Activated B cell treated with CpG ODN at 0.5 μM for 24 hours (primary cell): ENCODE measurements at regions of chr17 and their contacts with region 1.

Region 1: DNA sequence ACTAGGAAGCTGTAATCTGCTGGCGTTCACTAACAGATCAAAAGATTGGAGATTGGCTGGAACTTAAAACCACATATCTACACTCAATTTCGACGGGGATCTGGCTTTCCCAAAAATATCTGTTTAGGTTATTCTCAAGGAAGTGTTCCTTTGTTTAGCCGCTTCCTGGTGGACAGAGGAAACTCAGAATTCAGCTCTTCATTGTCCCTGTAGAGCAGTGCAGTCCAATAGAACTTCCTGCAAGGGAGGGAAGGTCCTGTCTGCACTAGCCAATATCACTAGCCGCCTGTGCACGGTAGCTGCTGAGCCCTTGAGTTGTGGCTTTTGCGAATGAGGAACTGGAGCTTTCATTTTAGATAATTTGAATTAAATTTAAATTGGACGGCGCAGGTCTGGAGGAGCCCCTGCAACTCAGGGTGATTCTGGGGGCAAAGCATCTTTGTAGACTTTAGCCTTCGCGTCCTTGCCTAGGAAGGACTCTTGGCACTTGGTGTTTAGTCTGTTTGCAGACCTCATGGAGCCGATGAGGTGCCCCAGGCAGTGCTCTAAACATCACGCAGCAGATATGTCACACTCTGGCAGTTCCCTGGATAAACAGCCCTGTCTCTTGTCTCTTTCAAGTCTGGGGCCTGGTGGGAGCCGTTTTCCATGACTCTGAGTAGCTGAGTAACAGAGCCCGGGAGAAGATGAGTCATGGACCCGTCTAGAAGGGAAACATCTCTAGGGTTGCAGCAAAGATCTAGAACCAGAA is 122.2 kb downstream of the CCDC182 start:
- DNase-seq: no peak
- ATAC-seq: peak; percentile 82
- H3K4me3 Mint-ChIP-seq: peak overlapping the region; percentile 77
- H3K27ac Mint-ChIP-seq: peak overlapping the region; percentile 89
- H3K4me1 Mint-ChIP-seq: peaks cover 60% of the 10 kb centered on the region
- H3K27me3 Mint-ChIP-seq: no peaks in the 10 kb centered on the region
- CTCF ChIP-seq: no peak

Region 2: GRCh38 chr17:57261084-57261461 is 361.8 kb before region 1 on chr17:
- CTCF ChIA-PET with region 1: no interaction called
- POLR2A ChIA-PET with region 1: interaction called, 17 read pairs
- intact Hi-C with region 1: loop called (anchors 2 kb)
- DNase-seq: no peak
- ATAC-seq: no peak
- H3K4me3 Mint-ChIP-seq: peak overlapping the region; percentile 65
- H3K27ac Mint-ChIP-seq: peak overlapping the region; percentile 6
- H3K4me1 Mint-ChIP-seq: peaks cover 62% of the 10 kb centered on the region
- H3K27me3 Mint-ChIP-seq: no peaks in the 10 kb centered on the region
- CTCF ChIP-seq: no peak

Region 3: GRCh38 chr17:57440522-57441485 is 182.1 kb before region 1 on chr17:
- CTCF ChIA-PET with region 1: no interaction called
- POLR2A ChIA-PET with region 1: no interaction called
- intact Hi-C with region 1: loop called (anchors 5 kb)
- DNase-seq: no peak
- ATAC-seq: peak; percentile 74
- H3K4me3 Mint-ChIP-seq: peak overlapping the region; percentile 32
- H3K27ac Mint-ChIP-seq: peak overlapping the region; percentile 81
- H3K4me1 Mint-ChIP-seq: peaks cover 91% of the 10 kb centered on the region
- H3K27me3 Mint-ChIP-seq: no peaks in the 10 kb centered on the region
- CTCF ChIP-seq: no peak

Region 4: GRCh38 chr17:57636985-57637665 is 14.3 kb after region 1 on chr17:
- CTCF ChIA-PET with region 1: interaction called, 6 read pairs
- POLR2A ChIA-PET with region 1: interaction called, 22 read pairs
- intact Hi-C with region 1: loop called (anchors 1 kb)
- DNase-seq: no peak
- ATAC-seq: peak; percentile 72
- H3K4me3 Mint-ChIP-seq: peak overlapping the region; percentile 39
- H3K27ac Mint-ChIP-seq: peak overlapping the region; percentile 91
- H3K4me1 Mint-ChIP-seq: peaks cover 24% of the 10 kb centered on the region
- H3K27me3 Mint-ChIP-seq: no peaks in the 10 kb centered on the region
- CTCF ChIP-seq: no peak

Region 5: GRCh38 chr17:57671667-57672632 is 49.1 kb after region 1 on chr17:
- CTCF ChIA-PET with region 1: interaction called, 35 read pairs
- POLR2A ChIA-PET with region 1: interaction called, 5 read pairs
- intact Hi-C with region 1: no loop called
- DNase-seq: peak; percentile 56
- ATAC-seq: peak; percentile 91
- H3K4me3 Mint-ChIP-seq: no peak overlapping the region
- H3K27ac Mint-ChIP-seq: no peak overlapping the region
- H3K4me1 Mint-ChIP-seq: peaks cover 8% of the 10 kb centered on the region
- H3K27me3 Mint-ChIP-seq: no peaks in the 10 kb centered on the region
- CTCF ChIP-seq: peak; percentile 88

Region 6: GRCh38 chr17:57868007-57868909 is 245.4 kb after region 1 on chr17:
- CTCF ChIA-PET with region 1: no interaction called
- POLR2A ChIA-PET with region 1: no interaction called
- intact Hi-C with region 1: no loop called
- DNase-seq: peak; percentile 53
- ATAC-seq: peak; percentile 94
- H3K4me3 Mint-ChIP-seq: peak overlapping the region; percentile 24
- H3K27ac Mint-ChIP-seq: peak overlapping the region; percentile 65
- H3K4me1 Mint-ChIP-seq: peaks cover 29% of the 10 kb centered on the region
- H3K27me3 Mint-ChIP-seq: peaks cover 20% of the 10 kb centered on the region
- CTCF ChIP-seq: no peak

Region 7: DNA sequence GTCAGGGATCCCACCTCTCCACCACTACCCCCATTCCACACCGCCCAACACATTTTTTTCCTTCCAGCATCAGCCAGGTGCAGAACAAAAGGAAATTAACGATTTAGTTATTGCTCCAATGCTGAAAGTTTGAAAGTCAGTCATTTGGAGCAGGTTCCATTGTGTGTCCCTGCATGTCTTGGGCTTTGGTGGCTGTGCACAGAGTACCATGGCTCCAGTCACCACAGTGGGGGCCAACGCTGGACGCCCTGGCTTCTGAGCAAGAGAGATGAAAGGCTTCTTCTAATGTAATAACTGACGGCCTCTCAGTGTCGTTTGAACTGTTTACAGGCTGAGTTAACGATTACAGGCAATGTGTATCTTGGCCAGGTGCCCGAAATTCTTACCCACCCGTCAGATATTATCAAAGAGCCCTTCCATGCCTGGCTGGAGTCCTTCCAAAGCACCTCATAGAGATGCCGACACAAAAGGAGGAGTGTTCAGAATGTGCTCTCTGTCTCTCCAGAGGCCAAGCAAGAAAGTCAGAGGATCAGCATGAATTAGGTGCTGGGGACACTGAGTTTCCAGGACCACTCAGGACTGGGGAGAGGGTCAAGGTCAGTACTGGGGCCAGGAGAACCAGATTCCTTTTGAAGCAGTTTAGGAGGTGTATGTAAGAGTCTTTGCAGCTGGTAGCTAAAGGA is 768.6 kb after region 1 on chr17:
- CTCF ChIA-PET with region 1: no interaction called
- POLR2A ChIA-PET with region 1: no interaction called
- intact Hi-C with region 1: no loop called
- DNase-seq: no peak
- ATAC-seq: no peak
- H3K4me3 Mint-ChIP-seq: no peak overlapping the region
- H3K27ac Mint-ChIP-seq: no peak overlapping the region
- H3K4me1 Mint-ChIP-seq: no peaks in the 10 kb centered on the region
- H3K27me3 Mint-ChIP-seq: no peaks in the 10 kb centered on the region
- CTCF ChIP-seq: no peak